B cell (primary cell): ENCODE measurements at regions of chr14 and their contacts with region 1.

Region 1: DNA sequence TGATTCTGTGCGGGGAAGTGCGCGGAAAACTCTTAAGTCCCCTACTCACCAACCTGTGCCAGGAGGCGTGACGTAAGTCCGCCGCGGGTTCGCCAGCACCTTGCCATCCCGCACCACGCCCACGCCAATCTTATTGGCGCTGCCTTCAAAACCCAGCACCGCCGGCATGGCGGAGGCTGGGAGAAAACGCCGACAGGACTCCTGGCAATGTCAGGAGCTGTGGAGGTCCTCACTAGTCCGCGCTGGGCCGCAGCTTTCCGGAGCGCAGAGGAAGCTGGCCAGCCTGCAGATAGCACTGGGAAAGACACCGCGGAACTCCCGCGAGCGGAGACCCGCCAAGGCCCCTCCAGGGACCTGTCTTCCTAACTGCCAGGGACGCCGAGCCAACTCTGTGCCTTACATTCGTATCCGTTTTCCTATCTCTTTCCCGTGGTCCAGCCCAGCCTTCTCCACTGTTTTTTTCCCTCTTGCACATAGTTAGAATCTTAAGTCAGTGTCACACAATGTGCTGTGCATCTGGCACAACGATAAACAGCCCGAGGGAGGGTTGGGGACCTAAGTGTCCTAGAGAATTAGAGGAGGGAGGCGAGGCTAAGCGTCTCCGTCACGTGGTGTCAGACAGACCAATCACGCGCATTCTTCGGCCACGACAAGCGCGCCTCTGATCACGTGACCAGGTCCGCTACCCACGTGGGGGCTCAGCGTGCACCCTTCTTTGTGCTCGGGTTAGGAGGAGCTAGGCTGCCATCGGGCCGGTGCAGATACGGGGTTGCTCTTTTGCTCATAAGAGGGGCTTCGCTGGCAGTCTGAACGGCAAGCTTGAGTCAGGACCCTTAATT is at the starts of genes APEX1 and OSGEP:
- DNase-seq: peak; percentile 99
- ATAC-seq: peak; percentile 91
- H3K4me3 ChIP-seq: peak within 1 kb of the TSS; percentile 70 to 95 (median 92)
- H3K4me3 Mint-ChIP-seq: peak within 1 kb of the TSS; percentile 17
- H3K27ac ChIP-seq: peak within 1 kb of the TSS; percentile 87 to 97
- H3K27ac Mint-ChIP-seq: no peak within 1 kb of the TSS
- H3K4me1 ChIP-seq: peaks cover 21 to 54% of the 10 kb centered on the region in 2 donors
- H3K4me1 Mint-ChIP-seq: peaks cover 23% of the 10 kb centered on the region
- H3K27me3 ChIP-seq: no peaks in the 10 kb centered on the region
- H3K27me3 Mint-ChIP-seq: no peaks in the 10 kb centered on the region
- CTCF ChIP-seq: no peak
- total RNA-seq, gene APEX1: 103 and 111 TPM in 2 replicates
- total RNA-seq, gene OSGEP: 115 and 117 TPM in 2 replicates

Region 2: DNA sequence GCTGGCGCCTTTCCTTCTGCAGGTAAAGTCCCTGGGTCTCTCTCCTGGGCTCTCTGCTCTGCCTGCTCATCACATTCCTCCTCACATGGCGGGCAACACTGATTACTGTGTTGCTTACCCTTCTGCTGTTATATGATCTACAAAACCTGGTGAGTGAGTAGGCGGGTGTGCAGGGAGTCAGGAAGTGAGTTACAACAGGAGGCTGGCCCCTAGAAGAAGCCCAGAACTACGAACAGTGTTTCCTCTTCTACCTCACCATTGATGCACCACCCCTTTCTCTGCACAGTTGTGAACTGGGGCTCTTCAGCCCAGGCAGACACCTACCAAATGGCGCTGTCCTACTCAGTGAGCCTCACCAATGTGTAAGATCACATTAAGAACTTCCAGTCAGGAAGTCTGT is 13.9 kb before region 1 on chr14:
- CTCF ChIA-PET with region 1: no interaction called
- POLR2A ChIA-PET with region 1: interaction called, 7 read pairs
- intact Hi-C with region 1: loop called (anchors 2 kb)
- DNase-seq: no peak
- ATAC-seq: peak; percentile 72
- H3K4me3 ChIP-seq: no peak overlapping the region
- H3K4me3 Mint-ChIP-seq: peak overlapping the region; percentile 60
- H3K27ac ChIP-seq: peak overlapping the region; percentile 46 to 56
- H3K27ac Mint-ChIP-seq: peak overlapping the region; percentile 88
- H3K4me1 ChIP-seq: peaks cover 45 to 57% of the 10 kb centered on the region in 2 donors
- H3K4me1 Mint-ChIP-seq: peaks cover 53% of the 10 kb centered on the region
- H3K27me3 ChIP-seq: no peaks in the 10 kb centered on the region
- H3K27me3 Mint-ChIP-seq: no peaks in the 10 kb centered on the region
- CTCF ChIP-seq: no peak

Region 3: DNA sequence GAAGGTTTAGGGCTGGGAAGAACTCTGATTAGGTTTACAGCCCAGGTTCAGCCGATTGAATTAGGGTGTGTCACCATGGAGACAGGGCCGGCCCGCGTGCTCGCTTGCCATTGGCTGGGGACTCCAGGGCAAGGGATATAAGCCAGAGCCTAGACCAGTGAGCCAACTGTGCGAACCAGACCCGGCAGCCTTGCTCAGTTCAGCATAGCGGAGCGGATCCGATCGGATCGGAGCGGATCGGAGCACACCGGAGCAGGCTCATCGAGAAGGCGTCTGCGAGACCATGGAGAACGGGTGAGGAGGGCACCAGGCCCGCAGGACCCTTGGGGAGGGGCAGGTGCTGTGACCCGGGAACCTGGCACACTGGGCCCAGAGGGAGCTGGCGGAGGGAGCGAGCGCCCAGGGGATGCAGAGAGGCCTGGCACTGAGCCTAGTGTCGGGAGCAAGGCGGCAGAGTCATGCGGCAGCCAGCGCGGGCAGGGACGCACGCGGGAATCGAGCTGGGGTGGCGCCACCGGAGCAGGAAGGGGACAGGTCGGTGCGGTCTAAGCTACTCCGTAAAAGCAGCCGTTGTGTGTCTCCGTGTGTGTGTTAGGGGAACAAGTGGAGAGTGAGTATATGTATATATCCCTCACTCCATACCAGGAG is 14.6 kb after region 1 on chr14 and contains the start of gene PNP:
- CTCF ChIA-PET with region 1: interaction called, 3 read pairs
- POLR2A ChIA-PET with region 1: interaction called, 20 read pairs
- intact Hi-C with region 1: loop called (anchors 1 kb)
- DNase-seq: peak; percentile 92
- ATAC-seq: peak; percentile 93
- H3K4me3 ChIP-seq: peak within 1 kb of the TSS; percentile 88 to 99 (median 98)
- H3K4me3 Mint-ChIP-seq: peak within 1 kb of the TSS; percentile 100
- H3K27ac ChIP-seq: peak within 1 kb of the TSS; percentile 73 to 81
- H3K27ac Mint-ChIP-seq: peak within 1 kb of the TSS; percentile 96
- H3K4me1 ChIP-seq: peaks cover 31 to 33% of the 10 kb centered on the region in 2 donors
- H3K4me1 Mint-ChIP-seq: peaks cover 52% of the 10 kb centered on the region
- H3K27me3 ChIP-seq: no peaks in the 10 kb centered on the region
- H3K27me3 Mint-ChIP-seq: no peaks in the 10 kb centered on the region
- CTCF ChIP-seq: no peak
- total RNA-seq, gene PNP: 38.9 and 42.0 TPM in 2 replicates